Gastrocnemius medialis (tissue), 4 donors: ENCODE measurements at regions of chr1 and their contacts with region 1.

Region 1: DNA sequence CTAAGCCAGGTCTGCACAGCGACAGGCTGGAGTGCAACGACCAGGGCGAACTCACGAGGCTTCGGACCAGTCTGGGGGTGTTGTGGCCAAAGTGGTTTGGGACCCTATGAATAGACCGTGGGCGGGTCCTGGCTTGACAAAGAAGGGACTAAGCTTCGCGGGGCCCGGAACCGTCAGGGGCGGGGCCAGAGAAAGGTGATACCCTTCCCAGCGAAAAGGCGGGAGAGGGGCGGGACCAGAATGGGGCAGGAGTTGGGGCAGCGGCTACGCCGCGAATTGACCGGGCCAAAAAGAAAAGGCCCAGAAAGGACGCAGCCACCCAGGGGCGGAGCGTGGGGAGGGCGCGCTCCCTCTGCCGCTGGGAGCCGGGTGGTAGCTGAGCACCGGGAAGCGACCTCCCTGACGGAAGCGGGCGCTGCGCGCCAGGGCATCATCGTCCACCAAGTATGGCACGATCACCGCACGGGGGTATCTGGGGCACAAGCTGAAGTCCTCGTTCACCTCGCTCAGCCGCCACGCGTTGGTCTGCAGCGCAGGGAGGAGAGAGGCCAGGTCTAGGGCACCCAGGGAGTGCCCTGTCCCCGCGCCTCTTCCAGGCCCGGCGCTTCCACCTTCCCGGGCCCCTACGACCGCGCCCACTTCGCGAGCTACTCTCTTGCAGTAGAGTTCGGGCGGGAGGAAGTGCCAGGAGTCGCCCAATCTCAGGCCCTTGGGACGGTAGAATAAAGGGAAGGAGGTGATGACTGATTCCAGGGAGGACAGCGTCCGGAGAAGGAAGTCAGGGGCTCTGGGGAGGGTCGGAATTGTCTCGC is 6.7 kb upstream of the FAM167B start:
- DNase-seq: peak in 1 of 2 donors; percentile 39
- ATAC-seq: peak; percentile 36 to 45
- H3K4me3 ChIP-seq: peak overlapping the region; percentile 62 to 74 (median 64)
- H3K27ac ChIP-seq: peak overlapping the region; percentile 59 to 74 (median 71)
- H3K4me1 ChIP-seq: peaks cover 10 to 13% of the 10 kb centered on the region in 2 donors
- H3K27me3 ChIP-seq: no peaks in the 10 kb centered on the region
- CTCF ChIP-seq: peak in 2 of 5 experiments; percentile 24 to 35
- POLR2A ChIP-seq: peak; percentile 48 to 54

Region 2: DNA sequence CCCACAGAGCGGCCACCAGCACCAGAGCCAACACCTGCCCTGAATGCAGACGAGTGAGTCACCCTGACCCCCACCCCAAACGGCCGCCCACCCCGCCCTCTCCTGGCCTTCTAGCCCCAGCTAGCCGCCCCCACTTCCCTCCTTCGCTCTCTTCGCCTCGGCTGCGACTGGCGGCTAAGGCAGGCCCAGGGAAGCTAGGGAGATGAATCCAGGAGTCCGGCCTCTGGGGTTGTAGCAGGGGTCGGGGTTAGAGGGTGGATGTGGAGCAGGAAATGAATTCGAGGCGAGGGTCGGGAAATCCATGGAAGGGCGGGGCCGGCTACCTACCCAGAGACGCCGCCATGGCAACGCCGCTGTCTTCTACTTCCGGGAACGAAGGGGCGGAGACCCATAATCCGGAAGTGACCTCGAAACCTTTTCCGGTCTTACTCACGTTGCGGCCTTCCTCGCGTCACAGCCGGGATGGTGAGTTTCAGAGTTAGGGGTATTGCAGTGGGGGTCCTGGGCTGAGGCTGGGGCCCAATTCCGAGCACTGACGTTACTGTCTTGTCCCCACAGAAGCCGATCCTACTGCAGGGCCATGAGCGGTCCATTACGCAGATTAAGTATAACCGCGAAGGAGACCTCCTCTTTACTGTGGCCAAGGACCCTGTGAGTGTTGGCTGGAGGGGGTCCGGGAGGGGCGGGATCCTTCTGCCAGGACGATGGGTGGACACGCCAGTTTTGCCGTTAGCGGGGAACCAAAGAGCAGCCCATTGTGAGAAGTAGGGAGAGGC is 18.2 kb before region 1 on chr1 and contains the starts of genes EIF3I and TMEM234:
- in situ Hi-C with region 1: no loop called
- intact Hi-C with region 1: loop called (anchors 2 kb)
- DNase-seq: peak; percentile 87
- ATAC-seq: peak; percentile 98 to 100
- H3K4me3 ChIP-seq: peak within 1 kb of the TSS; percentile 71 to 99 (median 84)
- H3K27ac ChIP-seq: peak within 1 kb of the TSS; percentile 87 to 97 (median 90)
- H3K4me1 ChIP-seq: peaks cover 23 to 28% of the 10 kb centered on the region in 2 donors
- H3K27me3 ChIP-seq: no peaks in the 10 kb centered on the region
- CTCF ChIP-seq: no peak
- POLR2A ChIP-seq: peak; percentile 88 to 96
- total RNA-seq, gene EIF3I: 211 to 294 (median 245) TPM
- total RNA-seq, gene TMEM234: 1.6 to 4.6 (median 4.4) TPM

Region 3: DNA sequence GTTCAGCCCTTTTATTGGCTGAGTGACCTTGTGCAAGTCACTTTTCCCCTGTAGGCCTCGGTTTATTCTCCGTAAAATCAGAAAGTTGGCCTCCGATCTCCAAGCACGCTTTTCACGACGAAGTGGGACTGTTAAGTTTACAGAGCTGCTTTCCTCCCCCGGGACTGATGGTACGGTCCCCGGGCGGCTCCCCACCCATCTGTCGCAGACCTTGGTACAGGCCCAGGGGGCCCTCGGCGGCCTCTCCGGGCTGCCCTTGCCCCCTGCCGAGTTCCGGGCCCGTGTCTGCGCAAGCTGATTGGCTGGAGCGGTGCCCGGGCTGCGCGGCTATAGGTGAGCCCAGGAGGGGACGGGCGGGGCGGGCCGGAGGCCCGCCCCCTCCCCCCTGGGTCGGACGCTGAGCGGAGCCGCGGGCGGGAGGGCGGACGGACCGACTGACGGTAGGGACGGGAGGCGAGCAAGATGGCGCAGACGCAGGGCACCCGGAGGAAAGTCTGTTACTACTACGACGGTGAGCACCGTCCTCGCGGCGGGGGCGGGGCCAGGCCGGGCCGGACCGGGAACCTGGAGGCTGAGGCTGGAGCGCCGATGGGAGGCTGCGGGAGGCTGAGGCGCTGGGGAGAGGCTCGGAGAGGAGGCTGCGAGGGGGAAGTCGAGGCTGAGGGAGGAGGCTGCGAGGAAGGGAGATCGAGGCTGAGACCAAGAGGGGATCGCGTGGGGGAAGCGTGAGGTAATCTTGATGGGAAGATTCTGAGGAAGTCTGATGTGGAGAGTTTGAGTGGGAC is 51.6 kb after region 1 on chr1 and contains the start of gene HDAC1:
- in situ Hi-C with region 1: no loop called
- intact Hi-C with region 1: loop called (anchors 5 kb)
- DNase-seq: peak; percentile 87 to 96
- ATAC-seq: peak; percentile 89 to 93
- H3K4me3 ChIP-seq: peak within 1 kb of the TSS; percentile 68 to 93 (median 82)
- H3K27ac ChIP-seq: peak within 1 kb of the TSS; percentile 81 to 88 (median 84)
- H3K4me1 ChIP-seq: peaks cover 0 to 3% of the 10 kb centered on the region in 2 donors
- H3K27me3 ChIP-seq: no peaks in the 10 kb centered on the region
- CTCF ChIP-seq: no peak
- POLR2A ChIP-seq: peak; percentile 54 to 66
- total RNA-seq, gene HDAC1: 8.7 to 23.8 (median 11.8) TPM

Region 4: GRCh38 chr1:32303997-32304622 is 63.8 kb after region 1 on chr1:
- in situ Hi-C with region 1: no loop called
- intact Hi-C with region 1: no loop called
- DNase-seq: no peak
- ATAC-seq: no peak
- H3K4me3 ChIP-seq: no peak overlapping the region
- H3K27ac ChIP-seq: no peak overlapping the region
- H3K4me1 ChIP-seq: no peaks in the 10 kb centered on the region
- H3K27me3 ChIP-seq: no peaks in the 10 kb centered on the region
- CTCF ChIP-seq: no peak
- POLR2A ChIP-seq: no peak